ENCODE measurements at regions of chrX and their contacts with region 1.

Region 1: GRCh38 chrX:17374619-17375366 is at the start of gene NHS:
- DNase-seq: peak; percentile 62 to 83
- H3K4me3 ChIP-seq: peak within 1 kb of the TSS; percentile 33
- H3K4me1 ChIP-seq: no peaks in the 10 kb centered on the region; the same call in 1 of the 2 replicates
- H3K27me3 ChIP-seq: peaks cover 75% of the 10 kb centered on the region

Region 2: DNA sequence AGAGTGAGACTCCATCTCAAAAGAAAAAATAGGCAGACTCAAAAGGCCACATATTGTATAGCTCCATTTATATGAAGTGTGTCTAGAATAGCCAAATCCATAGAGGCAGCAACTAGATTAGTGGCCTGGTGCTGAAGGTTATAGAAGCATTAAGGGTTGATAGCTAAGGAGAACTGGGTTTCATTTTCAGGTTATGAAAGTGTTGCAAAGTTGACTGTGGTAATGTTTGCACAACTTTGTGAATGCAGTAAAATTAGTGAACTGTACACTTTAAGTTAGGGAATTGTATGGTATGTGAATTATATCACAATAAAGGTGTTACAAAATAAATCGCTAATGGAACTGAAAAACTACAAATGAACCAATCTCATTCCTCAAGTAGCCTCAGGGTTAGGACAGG is 560.2 kb before region 1 on chrX:
- in situ Hi-C with region 1: no loop called
- DNase-seq: no peak
- H3K4me3 ChIP-seq: no peak overlapping the region
- H3K4me1 ChIP-seq: peaks cover 12% of the 10 kb centered on the region
- H3K27me3 ChIP-seq: no peaks in the 10 kb centered on the region

Region 3: DNA sequence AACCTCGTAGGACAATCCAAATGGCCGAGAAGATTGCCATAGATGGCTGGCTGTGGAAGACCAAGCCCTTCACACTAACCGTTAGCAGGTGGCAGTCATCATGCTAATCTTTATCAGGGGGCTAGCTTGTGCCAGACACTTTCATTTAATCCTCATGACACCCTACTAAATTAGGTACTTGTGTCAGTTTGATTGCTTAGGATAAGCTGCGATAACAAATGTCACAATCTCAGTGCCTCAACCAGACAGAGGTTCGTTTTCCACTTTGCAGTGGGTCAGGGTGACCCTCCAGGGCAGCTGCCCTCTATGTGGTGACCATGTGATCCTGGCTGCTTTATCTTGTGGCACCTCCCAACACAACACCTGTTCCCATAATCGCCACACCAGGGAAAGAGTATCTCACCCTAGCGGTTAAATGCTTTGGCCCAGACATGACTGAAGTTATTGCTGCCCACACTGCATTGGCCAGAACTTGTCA is 367.5 kb before region 1 on chrX:
- in situ Hi-C with region 1: no loop called
- DNase-seq: peak; percentile 19 to 56
- H3K4me3 ChIP-seq: no peak overlapping the region
- H3K4me1 ChIP-seq: no peaks in the 10 kb centered on the region
- H3K27me3 ChIP-seq: no peaks in the 10 kb centered on the region

Region 4: DNA sequence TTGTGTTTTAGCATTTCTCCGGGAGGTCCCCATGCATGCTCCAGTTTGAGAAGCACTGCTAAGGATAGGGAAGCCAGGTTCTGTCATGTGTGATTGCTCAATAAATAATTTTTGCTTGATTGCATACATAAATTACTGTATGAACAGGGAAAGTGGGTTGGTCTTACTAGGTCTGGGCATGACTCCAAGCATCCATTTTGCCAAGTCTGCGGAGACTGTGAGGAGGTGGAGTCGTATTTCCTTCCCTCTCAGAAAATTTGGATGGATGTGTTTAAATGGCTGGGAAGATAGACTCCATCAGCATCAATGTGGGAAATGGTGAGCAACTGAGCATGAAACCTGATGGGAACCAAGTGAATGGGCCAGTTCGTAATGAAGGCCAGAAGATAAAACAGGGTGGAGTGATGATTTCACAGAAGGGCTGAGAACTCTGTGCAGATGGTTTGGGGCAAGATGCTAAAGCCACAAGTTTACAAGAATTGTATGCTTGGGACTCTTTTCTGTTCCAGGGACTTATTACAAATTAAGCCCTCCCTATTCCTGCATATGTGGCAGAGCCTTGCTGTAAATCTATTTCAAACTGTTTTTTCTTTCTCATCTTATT is 84.3 kb after region 1 on chrX:
- in situ Hi-C with region 1: no loop called
- DNase-seq: no peak
- H3K4me3 ChIP-seq: no peak overlapping the region
- H3K4me1 ChIP-seq: no peaks in the 10 kb centered on the region
- H3K27me3 ChIP-seq: peaks cover 3% of the 10 kb centered on the region; the same call in 1 of the 2 replicates

Region 5: GRCh38 chrX:17484592-17484991 is 109.8 kb after region 1 on chrX:
- in situ Hi-C with region 1: no loop called
- DNase-seq: no peak
- H3K4me3 ChIP-seq: no peak overlapping the region
- H3K4me1 ChIP-seq: no peaks in the 10 kb centered on the region
- H3K27me3 ChIP-seq: peaks cover 5% of the 10 kb centered on the region

Region 6: DNA sequence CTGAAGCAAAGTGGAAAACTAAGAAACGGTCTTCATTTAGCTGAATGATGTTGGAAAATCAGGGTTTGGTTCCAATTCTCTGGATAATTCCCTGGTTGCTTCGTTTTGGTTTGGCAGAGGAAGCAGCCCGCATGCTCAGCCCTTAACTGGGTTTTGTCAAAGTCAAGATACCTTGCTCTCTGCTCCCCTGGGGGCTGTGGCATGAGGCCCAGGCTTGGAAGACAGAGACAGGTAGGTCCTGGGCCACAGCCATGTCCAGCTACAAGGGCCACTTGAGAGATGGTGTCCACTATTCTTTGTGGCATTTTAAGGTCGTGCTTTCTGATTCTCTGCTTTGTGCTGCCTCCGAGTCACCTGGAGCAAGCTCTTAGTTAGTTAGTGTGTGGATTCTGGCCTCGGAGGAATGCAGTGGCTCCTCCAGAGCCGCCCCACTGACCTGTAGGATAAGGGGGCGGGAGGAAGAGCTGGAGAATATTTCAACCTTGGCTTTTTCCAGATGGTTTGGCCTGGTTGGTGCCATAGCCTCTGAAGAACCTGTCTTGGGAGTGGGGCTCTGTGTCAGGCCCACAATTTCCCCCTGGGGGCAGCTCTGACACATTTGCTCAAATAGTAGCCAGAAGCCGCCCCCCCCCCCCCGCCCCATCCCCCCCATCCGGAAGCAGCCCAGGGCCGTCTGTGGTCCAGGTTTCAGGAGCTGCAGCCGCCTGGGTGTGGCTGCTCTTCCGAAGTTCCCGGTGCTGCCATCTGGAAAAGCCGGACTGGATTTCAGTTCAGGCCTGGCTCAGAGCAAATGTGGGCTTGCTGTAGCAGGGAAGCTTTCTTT is 147.3 kb after region 1 on chrX:
- in situ Hi-C with region 1: loop called (anchors 5 kb)
- DNase-seq: peak in 1 of 2 experiments; percentile 61
- H3K4me3 ChIP-seq: no peak overlapping the region
- H3K4me1 ChIP-seq: peaks cover 15% of the 10 kb centered on the region
- H3K27me3 ChIP-seq: no peaks in the 10 kb centered on the region

Measured in HAP-1 (cell line).